ENCODE measurements at regions of chr3 and their contacts with region 1.

Region 1: GRCh38 chr3:169430707-169431404 is 232.7 kb downstream of the MECOM start:
- DNase-seq: peak; percentile 89
- ATAC-seq: peak; percentile 93
- H3K4me3 ChIP-seq: peak overlapping the region; percentile 18; the same call in 1 of the 2 replicates
- H3K27ac ChIP-seq: peak overlapping the region; percentile 89
- H3K4me1 ChIP-seq: peaks cover 41% of the 10 kb centered on the region
- H3K27me3 ChIP-seq: no peaks in the 10 kb centered on the region
- CTCF ChIP-seq: no peak

Region 2: GRCh38 chr3:169454823-169455222 is 24.0 kb after region 1 on chr3:
- CTCF ChIA-PET with region 1: no interaction called
- POLR2A ChIA-PET with region 1: no interaction called
- intact Hi-C with region 1: loop called (anchors 2 kb)
- DNase-seq: peak; percentile 82
- ATAC-seq: peak; percentile 77
- H3K4me3 ChIP-seq: no peak overlapping the region
- H3K27ac ChIP-seq: peak overlapping the region; percentile 75
- H3K4me1 ChIP-seq: peaks cover 25% of the 10 kb centered on the region
- H3K27me3 ChIP-seq: no peaks in the 10 kb centered on the region
- CTCF ChIP-seq: no peak

Region 3: GRCh38 chr3:169497567-169498257 is 66.9 kb after region 1 on chr3:
- CTCF ChIA-PET with region 1: no interaction called
- POLR2A ChIA-PET with region 1: no interaction called
- intact Hi-C with region 1: loop called (anchors 1 kb)
- DNase-seq: peak; percentile 95
- ATAC-seq: peak; percentile 91
- H3K4me3 ChIP-seq: peak overlapping the region; percentile 12; the same call in 1 of the 2 replicates
- H3K27ac ChIP-seq: peak overlapping the region; percentile 44
- H3K4me1 ChIP-seq: peaks cover 19% of the 10 kb centered on the region
- H3K27me3 ChIP-seq: no peaks in the 10 kb centered on the region
- CTCF ChIP-seq: no peak

Measured in PC-3 (cell line).